Activated T-helper 1 cell treated with anti-CD3 and anti-CD28 coated beads, Interleukin-12 subunit alpha, Interleukin-12 subunit beta, Interleukin-2, Interleukin-4 antibody, amounts not matched to agents 30 ng/mL and 10 ng/mL and 1 ng/mL, durations not matched to agents 14 hours and 24 hours and 36 hours (primary cell): ENCODE measurements at regions of chr15 and their contacts with region 1.

Region 1: GRCh38 chr15:89893696-89894455 is at the start of gene AP3S2:
- DNase-seq: peak; percentile 87
- H3K4me3 Mint-ChIP-seq: peak within 1 kb of the TSS; percentile 97
- H3K27ac Mint-ChIP-seq: peak within 1 kb of the TSS; percentile 94
- H3K4me1 Mint-ChIP-seq: peaks cover 36% of the 10 kb centered on the region
- H3K27me3 Mint-ChIP-seq: no peaks in the 10 kb centered on the region
- total RNA-seq, gene AP3S2: 21.4 and 24.7 TPM in 2 replicates

Region 2: GRCh38 chr15:89334510-89335288 is 559.2 kb before region 1 on chr15 and contains the start of gene POLG:
- intact Hi-C with region 1: loop called (anchors 2 kb)
- DNase-seq: peak; percentile 99
- H3K4me3 Mint-ChIP-seq: peak within 1 kb of the TSS; percentile 85
- H3K27ac Mint-ChIP-seq: peak within 1 kb of the TSS; percentile 91
- H3K4me1 Mint-ChIP-seq: peaks cover 63% of the 10 kb centered on the region
- H3K27me3 Mint-ChIP-seq: peaks cover 5% of the 10 kb centered on the region
- total RNA-seq, gene POLG: 116 and 134 TPM in 2 replicates

Region 3: DNA sequence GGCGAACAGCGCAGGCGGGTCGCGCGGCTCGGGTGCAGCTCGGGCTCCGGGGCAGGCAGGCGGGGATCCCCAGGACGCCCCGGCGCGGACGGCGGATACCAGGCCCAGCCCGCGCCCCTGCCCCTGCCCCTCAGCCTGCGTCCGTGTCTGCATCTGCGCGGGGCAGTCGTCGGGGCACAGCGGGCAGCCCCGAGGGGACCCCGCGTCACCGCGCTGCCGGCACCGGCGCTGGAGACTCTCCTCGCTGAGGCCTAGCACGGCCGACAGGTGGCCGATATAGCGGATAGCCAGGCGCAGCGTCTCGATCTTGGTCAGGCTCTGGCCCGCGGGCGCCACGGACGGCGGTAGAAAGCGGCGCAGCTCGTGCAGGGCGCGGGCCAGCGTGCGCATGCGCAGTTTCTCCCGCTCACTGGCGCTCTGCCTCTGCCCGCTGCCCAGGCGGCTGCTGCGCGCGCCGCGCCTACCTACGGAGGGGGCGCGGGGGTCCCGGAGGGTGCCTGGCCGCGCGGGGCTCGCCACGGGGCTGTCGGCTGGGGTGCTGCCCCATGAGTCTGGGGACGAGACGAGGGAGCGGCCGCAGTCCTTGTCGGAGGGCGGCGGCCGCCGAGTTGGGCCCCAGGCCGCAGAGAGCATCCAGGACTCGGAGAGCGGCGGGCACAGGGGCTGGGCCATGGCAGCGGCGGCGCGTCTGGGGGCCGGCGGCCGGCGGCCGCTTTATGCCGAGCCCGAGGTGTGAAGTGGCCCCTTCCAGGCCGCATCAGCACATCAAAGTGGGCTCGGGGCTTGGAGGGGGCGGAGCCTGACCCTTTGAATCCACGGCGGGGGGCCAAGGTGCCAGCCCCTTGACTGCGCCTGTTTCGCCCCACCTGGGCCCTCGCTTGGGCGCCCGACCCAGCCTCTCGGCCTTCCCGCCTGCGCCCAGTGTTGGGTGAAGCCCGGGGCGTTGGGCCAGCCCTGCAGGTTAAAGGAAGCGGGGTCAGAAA is 143.0 kb before region 1 on chr15 and contains the start of gene MESP1:
- intact Hi-C with region 1: loop called (anchors 2 kb)
- DNase-seq: peak; percentile 84
- H3K4me3 Mint-ChIP-seq: peak within 1 kb of the TSS; percentile 84
- H3K27ac Mint-ChIP-seq: peak within 1 kb of the TSS; percentile 23
- H3K4me1 Mint-ChIP-seq: no peaks in the 10 kb centered on the region
- H3K27me3 Mint-ChIP-seq: peaks cover 29% of the 10 kb centered on the region
- total RNA-seq, gene MESP1: 4.6 and 6.6 TPM in 2 replicates

Region 4: DNA sequence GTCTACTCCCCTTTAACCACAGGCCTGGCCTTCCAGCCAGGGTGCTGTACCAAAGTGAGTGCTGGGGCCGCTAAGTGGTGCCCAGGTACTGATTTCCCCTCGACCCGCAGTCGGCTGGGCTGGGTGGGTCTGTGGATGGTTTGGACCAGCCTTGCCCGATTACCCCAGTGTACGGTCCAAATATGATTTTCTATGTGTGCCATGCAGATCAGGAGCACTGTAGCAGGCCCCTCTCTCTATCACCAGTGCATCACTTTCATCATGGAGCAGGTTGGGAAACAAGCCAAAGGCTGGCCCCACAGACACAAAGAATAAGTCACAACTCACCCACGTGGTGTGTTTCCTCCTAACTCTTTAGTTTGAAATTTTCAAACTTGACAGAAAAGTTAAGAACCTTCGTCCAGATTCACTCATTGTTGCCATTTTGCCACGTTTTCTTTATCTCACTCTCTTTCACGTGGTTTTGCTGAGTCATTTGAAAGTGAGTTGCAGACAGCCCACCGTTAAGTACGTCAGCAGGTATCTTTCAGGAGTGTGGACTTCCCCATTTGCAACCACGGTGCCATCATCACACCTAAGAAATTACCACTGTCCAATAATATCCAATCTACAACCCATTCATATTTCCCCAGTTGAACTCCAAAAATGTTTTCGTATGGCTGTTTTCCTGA is 144.2 kb after region 1 on chr15:
- intact Hi-C with region 1: loop called (anchors 1 kb)
- DNase-seq: peak; percentile 48
- H3K4me3 Mint-ChIP-seq: peak overlapping the region; percentile 63
- H3K27ac Mint-ChIP-seq: peak overlapping the region; percentile 89
- H3K4me1 Mint-ChIP-seq: peaks cover 77% of the 10 kb centered on the region
- H3K27me3 Mint-ChIP-seq: no peaks in the 10 kb centered on the region

Region 5: DNA sequence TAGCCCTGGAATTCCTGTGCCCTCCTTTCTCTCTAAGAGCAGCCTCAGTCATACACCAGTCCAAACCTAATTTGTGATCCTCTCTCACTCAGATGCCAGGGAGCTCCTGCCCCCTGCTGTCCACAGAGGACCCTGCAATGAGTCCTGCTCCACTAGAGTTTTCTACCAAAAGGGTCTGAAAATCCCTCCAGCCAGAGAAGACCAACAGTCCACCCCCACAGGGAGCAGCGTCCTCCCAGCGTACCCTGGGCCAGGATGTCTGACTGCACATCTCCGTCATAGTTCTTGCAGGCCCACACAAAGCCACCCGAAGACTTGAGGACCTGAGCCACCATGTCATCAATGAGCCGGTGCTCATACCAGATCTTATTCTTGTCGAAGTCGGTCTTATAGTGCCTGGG is 193.0 kb after region 1 on chr15:
- intact Hi-C with region 1: loop called (anchors 1 kb)
- DNase-seq: no peak
- H3K4me3 Mint-ChIP-seq: no peak overlapping the region
- H3K27ac Mint-ChIP-seq: no peak overlapping the region
- H3K4me1 Mint-ChIP-seq: peaks cover 4% of the 10 kb centered on the region
- H3K27me3 Mint-ChIP-seq: no peaks in the 10 kb centered on the region

Region 6: DNA sequence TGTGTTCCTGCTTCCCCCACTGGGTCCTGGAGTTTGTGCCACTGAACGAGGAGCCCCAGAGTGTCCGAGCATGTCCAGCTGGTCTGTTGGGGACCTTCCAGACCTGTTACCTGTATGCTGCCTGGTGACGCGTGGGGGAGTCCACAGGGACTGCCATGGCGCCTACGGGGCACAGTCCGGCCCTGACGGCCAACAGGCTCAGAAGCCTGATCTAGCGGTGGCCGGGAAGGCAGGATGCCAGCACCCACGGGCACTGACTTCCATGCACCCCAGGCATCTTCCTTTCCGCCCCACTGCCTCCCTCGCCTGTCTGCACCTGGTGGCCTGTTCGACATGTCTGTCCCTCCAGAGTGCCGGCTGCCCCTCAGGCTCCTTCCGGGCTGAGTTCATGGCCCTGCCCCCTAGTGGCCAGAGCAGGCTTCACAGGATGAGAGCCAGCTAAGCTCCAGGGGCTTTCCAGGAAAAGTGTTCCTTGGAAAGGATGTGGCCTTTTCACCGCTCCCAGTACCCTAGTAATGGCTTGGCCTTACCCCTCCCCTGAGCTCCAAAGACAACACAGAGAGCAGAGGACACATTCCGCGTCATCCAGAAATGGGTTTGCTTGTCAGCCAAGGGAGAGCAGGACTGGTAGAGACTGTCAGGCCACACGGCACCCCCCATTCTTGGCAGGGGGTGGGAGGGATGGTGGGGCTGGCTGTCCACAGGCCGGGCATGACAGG is 407.3 kb after region 1 on chr15:
- intact Hi-C with region 1: loop called (anchors 10 kb)
- DNase-seq: peak; percentile 47
- H3K4me3 Mint-ChIP-seq: no peak overlapping the region
- H3K27ac Mint-ChIP-seq: peak overlapping the region; percentile 61
- H3K4me1 Mint-ChIP-seq: peaks cover 29% of the 10 kb centered on the region
- H3K27me3 Mint-ChIP-seq: peaks cover 9% of the 10 kb centered on the region